ENCODE measurements at regions of chr10 and their contacts with region 1.

Region 1: DNA sequence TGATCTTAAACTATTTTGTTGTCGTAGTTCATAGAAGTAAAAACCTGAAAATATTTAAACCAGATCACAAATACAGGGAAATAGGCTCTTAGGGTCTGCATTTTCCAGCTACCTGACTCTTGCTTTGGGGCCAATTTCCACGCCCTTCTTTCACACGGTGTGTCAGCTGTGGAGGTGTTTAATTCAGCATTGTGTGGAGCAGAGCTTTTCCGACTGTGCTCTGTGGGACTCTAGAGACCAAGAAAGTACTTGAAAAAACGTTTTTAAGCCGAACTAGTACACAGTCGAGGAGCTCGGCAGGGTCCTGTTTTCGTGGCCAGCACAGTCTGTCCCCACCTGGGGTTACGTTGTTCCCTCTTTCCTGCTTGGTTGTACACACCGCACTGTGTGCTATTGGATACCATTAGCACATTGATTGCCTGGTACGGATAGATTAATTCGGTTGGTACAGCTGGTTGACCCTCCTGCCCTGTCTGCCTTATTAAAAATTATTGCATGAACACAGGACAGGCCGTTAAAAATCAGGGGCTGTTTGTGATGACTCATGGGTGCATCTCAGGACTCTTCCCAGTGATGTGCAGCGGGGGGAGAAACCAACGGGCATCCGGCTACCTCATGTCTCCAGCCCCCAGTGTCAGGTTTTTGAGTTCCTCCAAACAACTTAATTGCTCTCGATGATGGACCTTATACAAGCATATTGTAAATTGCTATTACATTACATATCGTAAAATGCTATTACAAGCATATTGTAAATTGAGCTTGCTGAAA is 80.7 kb upstream of the BTBD16 start:
- DNase-seq: no peak
- ATAC-seq: no peak
- H3K4me3 Mint-ChIP-seq: no peak overlapping the region
- H3K27ac Mint-ChIP-seq: peak overlapping the region; percentile 8
- H3K4me1 Mint-ChIP-seq: peaks cover 57% of the 10 kb centered on the region
- H3K27me3 Mint-ChIP-seq: no peaks in the 10 kb centered on the region
- CTCF ChIP-seq: no peak

Region 2: DNA sequence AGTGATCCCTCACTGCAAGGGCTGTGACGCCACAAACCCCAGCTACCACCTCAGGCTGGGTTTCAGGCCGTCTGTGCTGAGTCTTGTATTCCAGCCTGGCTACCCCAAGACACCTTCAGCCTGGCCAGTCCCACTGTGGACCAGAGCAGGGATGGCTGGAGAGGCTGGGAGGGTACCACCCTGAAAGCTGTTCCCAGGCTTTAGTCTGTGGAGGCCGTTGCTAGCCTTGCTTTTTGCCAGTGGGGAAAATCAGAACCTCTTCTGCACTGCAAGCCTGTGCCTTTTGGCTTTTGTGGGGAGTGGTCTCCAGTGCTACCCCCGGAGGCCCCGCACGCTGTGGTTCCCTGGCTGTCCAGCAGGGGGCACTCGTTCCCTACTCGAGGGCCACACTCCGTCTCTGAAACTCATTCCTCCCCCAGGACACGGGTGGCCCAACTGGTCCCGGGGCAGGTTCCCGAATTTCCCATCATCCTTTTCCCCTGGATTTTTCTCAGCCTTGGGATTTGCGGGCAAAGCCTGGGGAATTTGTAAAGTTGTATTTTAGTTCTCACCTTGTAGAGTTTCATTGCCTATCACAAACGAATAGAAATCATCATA is 47.6 kb before region 1 on chr10:
- CTCF ChIA-PET with region 1: interaction called, 11 read pairs
- POLR2A ChIA-PET with region 1: no interaction called
- DNase-seq: peak; percentile 90
- ATAC-seq: peak; percentile 85
- H3K4me3 Mint-ChIP-seq: no peak overlapping the region
- H3K27ac Mint-ChIP-seq: no peak overlapping the region; the same call in 1 of the 2 replicates
- H3K4me1 Mint-ChIP-seq: peaks cover 13% of the 10 kb centered on the region
- H3K27me3 Mint-ChIP-seq: no peaks in the 10 kb centered on the region; the same call in 1 of the 2 replicates
- CTCF ChIP-seq: peak; percentile 98